GM13976 (cell line): ENCODE measurements at regions of chrX and their contacts with region 1.

Region 1: DNA sequence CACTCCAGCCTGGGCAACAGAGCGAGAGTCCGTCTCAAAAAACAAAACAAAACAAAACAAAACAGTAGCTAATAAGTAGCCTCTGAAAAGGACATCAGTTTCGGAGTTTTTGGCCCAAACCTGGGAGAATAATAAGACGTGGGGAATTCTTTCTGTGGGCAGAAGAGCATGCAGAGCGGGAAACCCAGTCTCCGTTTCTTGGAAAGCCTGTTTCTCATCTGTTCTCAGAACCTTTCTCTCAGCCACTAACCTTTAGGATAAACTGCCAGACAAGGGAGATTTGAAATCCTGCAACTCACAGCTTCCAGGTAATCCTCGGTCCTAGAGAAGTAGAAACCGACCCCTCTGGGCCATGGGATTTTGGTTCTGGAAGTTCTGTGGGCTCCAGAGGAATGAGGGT is 9.1 kb upstream of the CSF2RA start:
- DNase-seq: no peak
- CTCF ChIP-seq: no peak

Region 2: GRCh38 chrX:1072637-1073377 is 186.7 kb before region 1 on chrX:
- in situ Hi-C with region 1: no loop called
- DNase-seq: no peak
- CTCF ChIP-seq: no peak

Region 3: GRCh38 chrX:1380672-1381233 is 121.3 kb after region 1 on chrX:
- in situ Hi-C with region 1: loop called (anchors 10 kb)
- DNase-seq: peak; percentile 34
- CTCF ChIP-seq: no peak